Activated naive CD8-positive, alpha-beta T cell treated with anti-CD3 and anti-CD28 coated beads, Interleukin-2, amount 10 ng/mL, durations not matched to agents 7 days and 5 days (primary cell): ENCODE measurements at regions of chr12 and their contacts with region 1.

Region 1: DNA sequence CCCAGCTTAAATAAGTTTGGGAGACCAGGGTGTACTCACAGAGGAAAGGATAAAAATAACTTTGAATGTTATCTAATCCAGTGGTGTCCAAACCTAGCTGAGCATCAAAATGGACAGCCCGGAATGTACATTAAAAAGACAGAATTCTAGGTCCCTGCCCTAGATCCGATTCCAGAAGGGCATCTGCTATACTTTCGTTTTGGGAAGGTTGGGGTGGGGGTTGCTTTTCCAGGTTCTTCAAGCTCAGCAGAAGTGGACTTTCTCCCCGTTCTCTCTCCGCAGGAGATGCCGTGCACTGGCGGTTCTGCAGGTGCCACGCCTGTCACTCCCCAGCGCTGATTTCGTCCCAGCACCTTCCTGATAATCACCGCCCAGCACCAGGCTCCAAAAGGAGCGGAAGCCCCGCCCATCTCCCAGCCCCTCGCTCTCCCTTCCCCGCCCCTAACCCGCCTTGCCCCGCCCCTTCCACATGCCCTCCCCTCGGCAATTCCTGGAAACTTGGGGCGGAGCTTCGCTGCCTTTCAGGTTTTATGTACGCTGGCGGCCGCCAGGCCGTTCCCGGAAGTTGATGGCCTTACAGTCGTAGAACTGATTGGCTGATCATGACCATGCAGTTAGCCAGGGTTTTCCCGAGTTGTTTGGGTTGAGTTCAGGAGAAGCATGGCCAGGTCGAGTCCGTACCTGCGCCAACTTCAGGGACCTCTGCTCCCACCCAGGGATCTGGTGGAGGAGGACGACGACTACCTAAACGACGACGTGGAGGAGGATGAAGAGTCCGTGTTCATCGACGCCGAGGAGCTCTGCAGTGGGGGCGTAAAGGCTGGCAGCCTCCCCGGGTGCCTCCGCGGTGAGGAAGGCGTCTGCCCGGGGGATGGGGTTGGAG is at the start of gene HELB:
- DNase-seq: peak; percentile 93
- ATAC-seq: peak; percentile 79
- H3K4me3 Mint-ChIP-seq: peak within 1 kb of the TSS; percentile 98
- H3K27ac Mint-ChIP-seq: peak within 1 kb of the TSS; percentile 99
- H3K4me1 Mint-ChIP-seq: peaks cover 38% of the 10 kb centered on the region
- H3K27me3 Mint-ChIP-seq: peaks cover 3% of the 10 kb centered on the region
- total RNA-seq, gene HELB: 35.8 to 36.0 TPM

Region 2: DNA sequence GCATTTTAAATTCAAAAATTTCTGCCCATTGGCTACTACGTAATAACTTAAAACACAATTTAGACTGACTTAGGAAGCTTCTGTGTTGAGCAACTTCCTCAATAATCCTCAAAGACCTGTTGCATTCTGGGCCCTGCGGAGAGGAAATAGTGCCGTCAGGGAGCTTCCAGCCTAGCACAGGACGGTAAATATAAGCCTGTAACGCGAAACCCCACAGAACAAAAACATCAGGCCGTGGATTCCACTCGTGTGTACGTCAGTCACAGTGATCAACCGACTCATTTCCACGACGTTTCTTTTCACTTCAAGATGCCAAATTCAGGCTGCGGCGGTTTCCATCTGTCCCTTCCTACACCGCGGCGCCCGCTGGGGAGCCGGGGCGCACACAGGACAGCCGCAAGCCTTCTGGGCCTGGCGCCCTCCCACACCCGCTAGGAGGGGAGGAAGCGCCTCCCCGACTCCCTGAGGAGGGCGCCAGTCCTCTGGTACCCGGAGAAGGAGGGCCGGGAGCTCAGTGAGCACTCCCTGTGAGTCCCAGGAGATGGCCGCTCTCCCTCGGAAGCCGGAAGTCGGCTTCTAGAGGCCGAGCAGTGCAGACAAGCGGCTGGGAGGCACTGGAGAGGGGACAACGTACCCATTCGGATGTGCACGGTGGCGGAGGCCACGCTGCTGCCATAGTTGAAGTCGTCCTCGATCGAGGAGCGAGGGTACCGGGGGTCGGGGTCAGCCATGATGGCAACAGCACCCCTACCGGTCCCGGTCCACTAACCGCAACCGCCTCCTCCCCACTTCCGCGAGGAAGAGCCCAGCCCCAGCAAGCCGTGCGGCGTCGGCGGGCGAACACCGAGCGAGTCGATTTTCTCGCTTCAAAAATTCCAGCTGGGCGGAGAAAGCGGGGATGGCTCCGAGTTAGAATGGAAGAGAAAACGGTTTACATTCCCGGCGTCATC is 132.7 kb before region 1 on chr12 and contains the start of gene TMBIM4:
- POLR2A ChIA-PET with region 1: interaction called, 19 read pairs
- DNase-seq: peak; percentile 91
- ATAC-seq: peak; percentile 81
- H3K4me3 Mint-ChIP-seq: peak within 1 kb of the TSS; percentile 96
- H3K27ac Mint-ChIP-seq: peak within 1 kb of the TSS; percentile 99
- H3K4me1 Mint-ChIP-seq: peaks cover 27% of the 10 kb centered on the region
- H3K27me3 Mint-ChIP-seq: no peaks in the 10 kb centered on the region
- total RNA-seq, gene TMBIM4: 72.1 to 77.1 TPM

Region 3: DNA sequence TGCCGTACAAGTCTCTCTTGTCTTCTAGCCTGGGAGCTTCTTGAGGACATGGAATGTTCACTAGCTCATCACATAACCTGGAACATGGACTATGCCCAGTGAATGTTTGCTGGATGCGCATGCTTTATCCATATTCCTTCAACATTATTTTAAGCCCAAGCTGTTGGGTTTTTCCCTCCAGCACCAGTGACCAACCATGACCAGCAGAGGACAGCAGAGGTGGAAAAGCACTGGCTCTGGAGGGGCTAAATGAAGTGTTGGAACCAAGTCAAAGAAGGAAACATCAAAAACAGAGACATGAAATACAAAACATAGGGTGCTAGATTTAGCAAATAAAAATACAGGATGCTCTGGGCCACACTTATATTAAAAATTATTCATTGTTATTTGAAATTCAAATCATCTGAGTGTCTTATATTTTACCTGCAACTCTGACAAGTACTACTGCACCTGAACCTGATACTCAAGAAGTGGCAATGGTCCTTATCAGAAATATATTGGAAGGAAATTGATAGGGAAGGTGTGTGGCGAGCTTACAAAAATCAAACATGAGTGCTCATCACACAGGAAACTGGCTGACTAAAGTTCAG is 23.0 kb before region 1 on chr12:
- POLR2A ChIA-PET with region 1: interaction called, 20 read pairs
- DNase-seq: peak; percentile 39
- ATAC-seq: peak; percentile 86
- H3K4me3 Mint-ChIP-seq: no peak overlapping the region
- H3K27ac Mint-ChIP-seq: peak overlapping the region; percentile 15
- H3K4me1 Mint-ChIP-seq: peaks cover 14% of the 10 kb centered on the region
- H3K27me3 Mint-ChIP-seq: peaks cover under 1% of the 10 kb centered on the region

Region 4: DNA sequence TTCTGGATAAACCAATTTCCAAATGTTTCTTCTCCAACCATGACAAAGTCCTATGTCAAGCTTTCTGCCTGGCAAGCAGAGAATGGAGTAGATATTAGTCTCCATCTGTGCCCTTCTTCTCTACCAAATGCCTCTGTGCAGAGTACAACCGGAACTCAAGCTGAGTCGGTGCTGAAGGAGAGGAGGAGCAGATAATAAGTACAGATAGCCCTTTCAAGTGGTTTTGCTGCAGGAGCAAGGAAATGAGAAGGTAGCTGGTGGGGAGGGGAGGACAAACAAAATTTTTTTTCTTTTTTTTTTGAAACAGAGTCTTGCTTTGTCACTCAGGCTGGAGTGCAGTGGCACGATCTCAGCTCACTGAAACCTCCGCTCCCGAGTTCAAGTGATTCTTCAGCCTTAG is 14.1 kb before region 1 on chr12:
- POLR2A ChIA-PET with region 1: interaction called, 96 read pairs
- DNase-seq: peak; percentile 39
- ATAC-seq: peak; percentile 88
- H3K4me3 Mint-ChIP-seq: peak overlapping the region; percentile 49
- H3K27ac Mint-ChIP-seq: peak overlapping the region; percentile 77
- H3K4me1 Mint-ChIP-seq: peaks cover 58% of the 10 kb centered on the region
- H3K27me3 Mint-ChIP-seq: peaks cover 2% of the 10 kb centered on the region

Region 5: GRCh38 chr12:66423266-66423665 is 121.1 kb after region 1 on chr12:
- POLR2A ChIA-PET with region 1: no interaction called
- DNase-seq: no peak
- ATAC-seq: no peak
- H3K4me3 Mint-ChIP-seq: no peak overlapping the region
- H3K27ac Mint-ChIP-seq: no peak overlapping the region
- H3K4me1 Mint-ChIP-seq: no peaks in the 10 kb centered on the region
- H3K27me3 Mint-ChIP-seq: peaks cover 19% of the 10 kb centered on the region